Right ventricle myocardium inferior (tissue), 1 donor: ENCODE measurements at regions of chr1 and their contacts with region 1.

Region 1: GRCh38 chr1:100178091-100178490 is at the start of gene LRRC39:
- DNase-seq: no peak
- ATAC-seq: peak; percentile 67
- total RNA-seq, gene LRRC39: 155 TPM

Region 2: DNA sequence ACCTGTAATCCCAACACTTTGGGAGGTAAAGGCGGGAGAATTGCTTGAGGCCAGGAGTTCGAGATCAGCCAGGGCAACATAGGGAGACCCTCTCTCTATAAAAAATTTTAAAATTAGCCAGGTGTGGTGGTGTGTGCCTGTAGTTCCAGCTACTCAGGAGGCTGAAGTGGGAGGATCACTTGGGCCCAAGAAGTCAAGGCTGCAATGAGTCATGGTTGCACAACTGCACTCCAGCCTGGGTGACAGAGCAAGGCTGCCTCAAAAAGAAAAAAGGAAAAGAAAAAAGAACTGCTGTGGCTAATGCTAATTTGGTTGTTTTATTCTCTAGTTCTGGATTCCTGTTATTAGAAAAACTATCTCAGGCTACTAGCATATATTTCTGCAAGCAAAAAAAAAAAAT is 41.8 kb after region 1 on chr1:
- intact Hi-C with region 1: loop called (anchors 5 kb)
- DNase-seq: no peak
- ATAC-seq: no peak

Region 3: DNA sequence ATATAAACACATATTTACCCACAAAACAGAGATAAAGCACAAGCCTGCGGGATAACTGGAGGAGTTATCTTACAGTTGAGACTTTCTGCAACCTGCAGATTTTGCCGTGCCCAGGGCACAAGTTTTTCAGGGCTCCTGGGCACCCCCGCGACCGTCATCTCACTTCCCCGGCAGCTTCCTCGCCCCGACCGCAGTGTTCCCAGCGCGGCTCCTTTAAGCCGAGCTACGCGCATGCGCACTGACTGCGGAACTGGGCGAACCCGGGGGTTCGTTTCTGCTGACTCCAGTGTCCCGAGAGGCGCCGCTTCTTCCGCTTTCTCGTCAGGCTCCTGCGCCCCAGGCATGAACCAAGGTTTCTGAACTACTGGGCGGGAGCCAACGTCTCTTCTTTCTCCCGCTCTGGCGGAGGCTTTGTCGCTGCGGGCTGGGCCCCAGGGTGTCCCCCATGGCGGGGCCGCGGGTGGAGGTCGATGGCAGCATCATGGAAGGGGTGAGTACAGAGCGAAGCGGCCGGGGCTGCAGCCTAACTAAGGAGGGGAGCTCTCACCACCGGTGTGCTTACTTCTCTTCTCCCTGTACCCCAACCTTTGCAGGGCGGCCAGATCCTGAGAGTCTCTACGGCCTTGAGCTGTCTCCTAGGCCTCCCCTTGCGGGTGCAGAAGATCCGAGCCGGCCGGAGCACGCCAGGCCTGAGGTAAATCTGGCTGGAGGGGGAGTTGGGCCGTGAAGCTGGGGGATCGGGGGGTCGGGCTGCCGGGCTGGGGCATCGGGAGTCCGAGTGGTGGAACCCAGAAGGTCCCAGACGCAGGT is 88.0 kb after region 1 on chr1 and contains the start of gene RTCA:
- intact Hi-C with region 1: loop called (anchors 5 kb)
- DNase-seq: peak; percentile 100
- ATAC-seq: peak; percentile 99
- total RNA-seq, gene RTCA: 46.2 TPM